PC-3 (cell line): ENCODE measurements at regions of chr2 and their contacts with region 1.

Region 1: DNA sequence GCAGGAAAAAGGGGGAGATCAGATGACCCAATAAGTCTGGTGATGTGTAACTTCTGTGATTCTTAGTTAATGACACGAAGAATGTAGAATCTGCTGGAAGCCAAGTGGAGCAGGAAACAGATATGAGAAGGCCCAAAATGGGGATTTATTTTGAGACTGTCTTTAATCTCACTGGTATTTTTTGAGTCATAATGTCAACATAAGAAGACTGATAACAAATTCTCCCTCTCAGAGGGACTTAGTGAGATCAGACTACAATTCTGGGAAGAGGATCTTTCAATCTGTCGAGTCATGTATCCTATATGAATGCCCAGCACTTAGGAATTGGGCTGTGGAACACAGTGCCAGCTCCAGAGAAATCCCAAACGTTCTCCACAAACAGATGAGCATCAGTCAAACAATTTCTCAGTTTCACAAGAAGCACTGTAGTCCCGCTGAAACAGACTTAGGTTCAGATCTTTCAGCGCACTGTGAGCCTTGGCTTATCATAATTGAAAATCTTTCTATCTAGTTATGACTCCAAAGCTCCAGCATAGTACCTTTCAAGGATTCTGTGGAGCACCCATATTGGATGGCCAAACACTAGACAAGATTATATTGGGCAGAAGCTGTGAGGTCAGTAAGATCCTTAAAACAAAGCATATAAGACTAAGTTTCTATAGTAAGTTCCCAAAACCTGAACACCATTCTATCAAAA is 738.2 kb downstream of the LRP1B start:
- DNase-seq: peak; percentile 59
- ATAC-seq: peak; percentile 75
- H3K4me3 ChIP-seq: no peak overlapping the region
- H3K27ac ChIP-seq: peak overlapping the region; percentile 63
- H3K4me1 ChIP-seq: peaks cover 17% of the 10 kb centered on the region
- H3K27me3 ChIP-seq: no peaks in the 10 kb centered on the region
- CTCF ChIP-seq: no peak

Region 2: GRCh38 chr2:141331127-141331526 is 61.5 kb before region 1 on chr2:
- CTCF ChIA-PET with region 1: no interaction called
- POLR2A ChIA-PET with region 1: no interaction called
- intact Hi-C with region 1: loop called (anchors 2 kb)
- DNase-seq: peak; percentile 78
- ATAC-seq: peak; percentile 94
- H3K4me3 ChIP-seq: no peak overlapping the region
- H3K27ac ChIP-seq: no peak overlapping the region
- H3K4me1 ChIP-seq: peaks cover 20% of the 10 kb centered on the region
- H3K27me3 ChIP-seq: no peaks in the 10 kb centered on the region
- CTCF ChIP-seq: no peak

Region 3: GRCh38 chr2:141341444-141341843 is 51.2 kb before region 1 on chr2:
- CTCF ChIA-PET with region 1: no interaction called
- POLR2A ChIA-PET with region 1: no interaction called
- intact Hi-C with region 1: loop called (anchors 2 kb)
- DNase-seq: peak; percentile 82
- ATAC-seq: peak; percentile 91
- H3K4me3 ChIP-seq: no peak overlapping the region
- H3K27ac ChIP-seq: peak overlapping the region; percentile 41; the same call in 1 of the 2 replicates
- H3K4me1 ChIP-seq: peaks cover 8% of the 10 kb centered on the region; the same call in 1 of the 2 replicates
- H3K27me3 ChIP-seq: no peaks in the 10 kb centered on the region
- CTCF ChIP-seq: no peak

Region 4: GRCh38 chr2:141411419-141411818 is 18.8 kb after region 1 on chr2:
- CTCF ChIA-PET with region 1: no interaction called
- POLR2A ChIA-PET with region 1: no interaction called
- intact Hi-C with region 1: no loop called
- DNase-seq: no peak
- ATAC-seq: no peak
- H3K4me3 ChIP-seq: no peak overlapping the region
- H3K27ac ChIP-seq: no peak overlapping the region
- H3K4me1 ChIP-seq: no peaks in the 10 kb centered on the region
- H3K27me3 ChIP-seq: no peaks in the 10 kb centered on the region
- CTCF ChIP-seq: no peak